RWPE1 (cell line): ENCODE measurements at regions of chr22 and their contacts with region 1.

Region 1: GRCh38 chr22:23178512-23179254 is 1.6 kb upstream of the BCR start:
- DNase-seq: peak; percentile 67
- H3K27ac ChIP-seq: peak overlapping the region; percentile 81
- CTCF ChIP-seq: peak; percentile 96

Region 2: GRCh38 chr22:23281406-23282088 is 102.9 kb after region 1 on chr22:
- CTCF ChIA-PET with region 1: interaction called, 16 read pairs
- POLR2A ChIA-PET with region 1: no interaction called
- DNase-seq: peak; percentile 74
- H3K27ac ChIP-seq: peak overlapping the region; percentile 97
- CTCF ChIP-seq: peak; percentile 90